GM12878 (cell line): ENCODE measurements at regions of chr16 and their contacts with region 1.

Region 1: DNA sequence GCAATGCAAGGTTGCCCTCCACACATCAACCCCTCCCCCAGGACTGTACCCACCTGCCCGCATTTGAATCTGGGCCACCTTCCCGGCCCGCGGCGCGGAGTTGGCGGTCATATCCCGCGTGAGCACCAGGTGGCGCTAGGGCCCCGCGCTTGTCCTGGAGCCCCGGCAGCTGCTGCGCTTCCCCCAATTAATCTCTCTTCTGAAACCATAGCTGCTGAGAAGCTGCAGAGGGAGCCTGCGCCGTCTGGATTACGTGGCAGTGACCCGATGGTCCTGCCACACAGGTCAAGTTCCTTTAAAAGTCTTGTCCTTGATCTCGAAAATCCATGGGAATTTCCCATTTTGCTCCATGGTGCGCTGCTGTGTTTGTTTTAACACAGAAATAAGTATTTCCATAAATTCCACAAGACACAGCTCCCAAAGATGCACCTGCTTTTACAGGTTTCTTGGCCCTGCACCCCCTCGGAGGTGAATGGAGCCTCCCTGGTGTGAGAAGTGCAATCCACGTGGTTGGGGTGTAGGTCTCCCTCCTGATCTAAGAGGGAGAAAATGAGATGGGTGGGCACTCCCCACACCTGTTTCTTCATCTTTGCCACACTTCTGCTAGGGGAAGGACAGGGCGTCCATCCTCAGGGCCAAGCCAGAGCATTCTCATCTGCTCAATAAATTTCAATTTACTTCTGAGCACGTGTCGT is 22.1 kb downstream of the COX4I1 start:
- DNase-seq: peak; percentile 41
- ATAC-seq: peak; percentile 94
- H3K4me3 ChIP-seq: no peak overlapping the region
- H3K27ac ChIP-seq: no peak overlapping the region
- H3K4me1 ChIP-seq: peaks cover 18% of the 10 kb centered on the region
- H3K27me3 ChIP-seq: no peaks in the 10 kb centered on the region
- CTCF ChIP-seq: peak; percentile 91 to 99 (median 93)
- EP300 ChIP-seq: 0 out of 4 replicates have a peak, but pooled peaks of 1 of the 2 experiments have one; percentile 16
- POLR2A ChIP-seq: no peak
- RAD21 ChIP-seq: peak; percentile 99

Region 2: DNA sequence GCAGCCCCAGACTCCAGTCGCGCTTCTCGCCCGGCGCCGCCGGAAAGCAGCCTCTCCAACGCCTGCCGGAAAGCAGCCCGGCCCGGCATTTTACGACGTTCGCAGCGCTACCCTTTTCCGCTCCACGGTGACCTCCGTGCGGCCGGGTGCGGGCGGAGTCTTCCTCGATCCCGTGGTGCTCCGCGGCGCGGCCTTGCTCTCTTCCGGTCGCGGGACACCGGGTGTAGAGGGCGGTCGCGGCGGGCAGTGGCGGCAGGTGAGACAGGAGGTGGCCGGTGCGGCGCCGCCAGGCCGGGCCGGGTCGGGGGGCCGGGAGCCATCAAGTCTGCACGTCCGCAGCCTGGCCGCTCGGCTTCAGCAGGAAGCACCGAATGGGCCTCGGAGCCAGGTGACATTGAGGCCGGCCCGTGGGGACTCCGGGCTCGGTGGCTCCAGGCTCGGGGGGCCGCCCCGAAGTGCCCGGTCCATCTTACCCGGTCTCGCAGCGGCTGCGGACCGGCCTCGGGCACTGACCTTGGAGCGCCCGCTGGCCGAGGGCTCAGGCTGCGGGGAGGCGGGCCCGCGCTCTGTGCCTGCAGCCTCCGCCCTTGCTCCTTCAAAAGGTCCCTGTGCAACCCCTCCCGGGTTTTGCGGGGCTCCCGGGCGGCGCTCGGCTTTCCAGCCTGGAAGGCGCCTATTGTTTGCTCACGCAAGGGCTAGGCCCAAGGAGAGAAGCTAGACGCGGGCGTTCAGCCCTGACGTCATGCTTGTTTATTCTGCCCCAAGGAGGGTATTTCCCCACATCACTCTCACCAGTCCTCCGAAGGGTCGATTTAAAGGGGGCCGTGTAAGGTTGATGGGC is 21.9 kb before region 1 on chr16 and contains the starts of genes COX4I1 and EMC8:
- CTCF ChIA-PET with region 1: interaction called, 11 read pairs
- POLR2A ChIA-PET with region 1: no interaction called
- RAD21 ChIA-PET with region 1: interaction called, 8 read pairs
- SMC1A ChIA-PET with region 1: interaction called, 5 read pairs
- in situ Hi-C with region 1: no loop called
- intact Hi-C with region 1: no loop called
- DNase-seq: peak; percentile 63
- ATAC-seq: peak; percentile 95
- H3K4me3 ChIP-seq: peak within 1 kb of the TSS; percentile 95
- H3K27ac ChIP-seq: peak within 1 kb of the TSS; percentile 94
- H3K4me1 ChIP-seq: peaks cover 11% of the 10 kb centered on the region
- H3K27me3 ChIP-seq: no peaks in the 10 kb centered on the region
- CTCF ChIP-seq: no peak
- EP300 ChIP-seq: peak in 1 of 2 experiments; percentile 41; a peak in 1 of 4 replicates
- POLR2A ChIP-seq: peak; percentile 98
- RAD21 ChIP-seq: no peak
- polyA plus RNA-seq, gene COX4I1: 1,747 to 1,889 TPM
- polyA plus RNA-seq, gene EMC8: 7.8 to 16.5 TPM

Region 3: DNA sequence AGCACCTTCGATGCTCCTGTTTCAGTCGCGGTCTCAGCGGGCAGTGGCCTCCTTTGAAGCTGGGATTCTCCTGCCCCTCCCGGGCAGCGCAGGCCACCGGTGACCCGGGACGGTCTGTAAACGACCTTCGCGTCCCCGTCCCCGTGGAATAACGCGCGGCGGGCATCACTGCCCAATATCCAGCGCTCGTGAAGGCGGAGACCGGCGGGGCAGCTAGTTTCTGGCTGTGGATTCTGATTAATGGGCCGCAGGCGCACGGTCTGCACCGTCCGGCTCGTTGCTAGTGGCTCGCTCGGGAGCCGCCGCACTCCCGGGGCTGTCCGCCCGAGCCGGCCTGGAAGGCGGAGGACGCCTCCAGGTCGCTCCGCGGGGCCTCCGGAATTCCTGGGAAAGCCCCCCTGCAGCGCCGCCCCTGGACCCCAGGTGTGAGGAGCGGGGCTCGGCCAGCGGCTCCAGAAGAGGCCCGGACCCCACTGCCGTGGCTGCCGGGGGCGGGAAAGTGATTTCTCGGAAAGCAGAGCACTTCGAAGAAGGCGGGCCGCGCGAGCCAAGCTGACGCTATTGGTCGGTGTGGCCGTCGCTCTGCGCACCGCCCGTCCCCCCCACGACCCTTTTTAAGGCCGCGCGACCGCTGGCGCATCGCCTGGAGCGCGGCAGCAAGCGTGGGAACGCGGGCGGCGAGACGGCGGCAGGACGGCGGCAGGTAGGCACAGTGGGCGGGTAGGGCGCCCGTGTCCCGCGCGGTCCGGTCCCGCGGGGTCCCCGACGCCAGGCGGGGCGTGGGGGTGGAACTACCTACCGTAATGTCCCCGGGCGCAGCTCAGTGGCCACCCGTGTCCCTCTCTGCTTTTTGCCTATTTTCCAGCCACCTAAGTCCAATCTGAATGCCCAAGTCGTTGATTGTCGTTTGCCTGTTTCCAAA is 77.2 kb after region 1 on chr16 and contains the start of gene IRF8:
- CTCF ChIA-PET with region 1: interaction called, 295 read pairs
- POLR2A ChIA-PET with region 1: interaction called, 7 read pairs
- RAD21 ChIA-PET with region 1: interaction called, 211 read pairs
- SMC1A ChIA-PET with region 1: interaction called, 187 read pairs
- in situ Hi-C with region 1: loop called (anchors 5 kb)
- intact Hi-C with region 1: loop called (anchors 1 kb)
- DNase-seq: peak; percentile 59
- ATAC-seq: peak; percentile 77
- H3K4me3 ChIP-seq: peak within 1 kb of the TSS; percentile 99
- H3K27ac ChIP-seq: peak within 1 kb of the TSS; percentile 89
- H3K4me1 ChIP-seq: peaks cover 7% of the 10 kb centered on the region
- H3K27me3 ChIP-seq: no peaks in the 10 kb centered on the region
- CTCF ChIP-seq: no peak
- EP300 ChIP-seq: no peak
- POLR2A ChIP-seq: peak; percentile 100
- RAD21 ChIP-seq: no peak
- polyA plus RNA-seq, gene IRF8: 17.1 to 34.5 TPM

Region 4: GRCh38 chr16:85935974-85936760 is 114.6 kb after region 1 on chr16:
- CTCF ChIA-PET with region 1: interaction called, 14 read pairs
- POLR2A ChIA-PET with region 1: no interaction called
- RAD21 ChIA-PET with region 1: interaction called, 5 read pairs
- SMC1A ChIA-PET with region 1: interaction called, 9 read pairs
- in situ Hi-C with region 1: no loop called
- intact Hi-C with region 1: no loop called
- DNase-seq: peak; percentile 89
- ATAC-seq: peak; percentile 93
- H3K4me3 ChIP-seq: peak overlapping the region; percentile 36; the same call in 1 of the 2 replicates
- H3K27ac ChIP-seq: peak overlapping the region; percentile 97
- H3K4me1 ChIP-seq: peaks cover 54% of the 10 kb centered on the region
- H3K27me3 ChIP-seq: no peaks in the 10 kb centered on the region
- CTCF ChIP-seq: peak in 2 of 3 experiments; percentile 5 to 6; a peak in 2 of 6 replicates
- EP300 ChIP-seq: peak; percentile 74 to 82; a peak in 2 of 4 replicates
- POLR2A ChIP-seq: 0 out of 2 replicates have a peak, but pooled peaks have one; percentile 19
- RAD21 ChIP-seq: peak; percentile 26; the same call in 1 of the 2 replicates

Region 5: DNA sequence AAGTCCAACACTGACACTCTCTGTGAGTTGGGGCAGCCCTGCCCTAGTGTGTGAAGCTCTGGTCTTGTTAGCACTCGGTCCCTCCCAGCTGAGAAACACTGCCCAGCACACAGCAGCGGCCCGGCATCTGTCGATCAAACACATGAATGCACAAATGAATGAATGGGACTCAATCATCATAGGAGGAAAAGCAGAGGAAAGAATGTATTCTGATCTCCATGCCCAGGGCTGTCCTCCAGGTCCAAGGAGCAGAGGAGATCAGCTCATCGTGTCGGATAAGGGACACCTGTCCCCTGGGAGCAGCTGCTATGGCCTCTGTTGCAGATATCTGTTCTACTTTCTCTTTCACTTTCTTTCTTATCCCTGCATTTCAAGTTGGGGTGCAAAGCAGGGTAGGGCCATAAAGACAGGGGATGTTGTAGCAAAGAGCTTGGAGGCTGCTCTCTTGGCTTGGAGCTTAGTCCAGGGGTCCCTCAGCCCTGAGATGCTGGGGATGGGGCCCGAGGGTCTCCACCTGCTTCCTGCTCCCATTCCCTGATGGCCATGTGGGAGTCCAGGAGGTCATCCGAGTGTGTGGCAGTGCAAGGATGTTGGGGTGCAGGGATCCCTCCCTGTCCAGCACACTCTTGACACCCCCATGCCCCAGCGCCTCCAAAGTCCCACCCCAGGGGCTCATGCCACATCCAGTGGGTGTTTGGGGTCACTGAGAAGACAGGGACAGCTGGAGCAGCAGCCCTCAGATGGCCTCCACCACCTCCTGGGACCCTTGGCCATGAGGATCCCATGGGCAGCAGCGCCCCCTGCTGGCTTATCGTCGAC is 165.6 kb after region 1 on chr16:
- CTCF ChIA-PET with region 1: interaction called, 337 read pairs
- POLR2A ChIA-PET with region 1: interaction called, 5 read pairs
- RAD21 ChIA-PET with region 1: interaction called, 194 read pairs
- SMC1A ChIA-PET with region 1: interaction called, 208 read pairs
- in situ Hi-C with region 1: loop called (anchors 5 kb)
- intact Hi-C with region 1: loop called (anchors 1 kb)
- DNase-seq: no peak
- ATAC-seq: peak; percentile 52
- H3K4me3 ChIP-seq: peak overlapping the region; percentile 41; the same call in 1 of the 2 replicates
- H3K27ac ChIP-seq: peak overlapping the region; percentile 100
- H3K4me1 ChIP-seq: peaks cover 89% of the 10 kb centered on the region
- H3K27me3 ChIP-seq: no peaks in the 10 kb centered on the region
- CTCF ChIP-seq: peak; percentile 9 to 53 (median 34); a peak in 5 of 6 replicates
- EP300 ChIP-seq: no peak
- POLR2A ChIP-seq: no peak
- RAD21 ChIP-seq: peak; percentile 60

Region 6: DNA sequence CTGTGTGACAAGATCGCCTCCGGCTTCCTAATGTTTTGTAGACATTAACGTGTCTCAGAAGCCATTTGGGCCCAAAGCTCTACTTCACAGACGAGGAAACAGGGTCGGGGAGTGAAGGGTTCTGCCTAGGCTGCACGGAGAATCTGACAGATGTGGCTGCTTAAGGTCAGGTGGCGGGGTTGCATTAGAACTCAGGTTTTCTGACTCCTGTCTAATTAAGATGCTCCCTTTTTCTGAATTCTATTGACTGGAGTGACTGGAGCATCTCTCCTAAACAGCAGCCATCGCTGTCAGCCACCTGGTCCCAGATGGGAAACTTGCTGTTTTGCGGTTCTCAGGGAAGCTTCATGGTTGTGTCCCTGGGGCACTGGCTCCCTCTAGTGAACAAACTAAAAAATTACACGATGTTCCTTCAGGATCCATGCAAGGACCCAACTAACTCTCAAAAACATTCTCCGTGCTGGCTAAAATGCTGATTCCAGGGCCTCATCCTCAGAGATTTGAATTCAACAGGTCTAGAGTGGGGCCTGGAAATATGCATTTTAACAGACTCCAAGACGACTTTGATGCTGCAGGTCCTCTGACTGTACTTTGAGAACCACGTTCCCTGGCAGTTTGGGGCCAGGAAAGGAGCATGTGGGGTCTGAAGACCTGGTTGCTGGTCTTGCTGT is 194.7 kb after region 1 on chr16:
- CTCF ChIA-PET with region 1: interaction called, 345 read pairs
- POLR2A ChIA-PET with region 1: interaction called, 3 read pairs
- RAD21 ChIA-PET with region 1: interaction called, 54 read pairs
- SMC1A ChIA-PET with region 1: interaction called, 229 read pairs
- in situ Hi-C with region 1: loop called (anchors 5 kb)
- intact Hi-C with region 1: loop called (anchors 1 kb)
- DNase-seq: peak; percentile 59
- ATAC-seq: peak; percentile 75
- H3K4me3 ChIP-seq: no peak overlapping the region
- H3K27ac ChIP-seq: no peak overlapping the region
- H3K4me1 ChIP-seq: peaks cover 20% of the 10 kb centered on the region
- H3K27me3 ChIP-seq: no peaks in the 10 kb centered on the region
- CTCF ChIP-seq: peak; percentile 69 to 90 (median 79)
- EP300 ChIP-seq: no peak
- POLR2A ChIP-seq: no peak
- RAD21 ChIP-seq: peak; percentile 99